ENCODE measurements at regions of chr2 and their contacts with region 1.

Region 1: GRCh38 chr2:159175182-159175581 is 111.3 kb downstream of the WDSUB1 start:
- DNase-seq: no peak
- H3K4me3 ChIP-seq: no peak overlapping the region
- CTCF ChIP-seq: no peak
- POLR2A ChIP-seq: no peak

Region 2: GRCh38 chr2:159728629-159729028 is 553.4 kb after region 1 on chr2:
- intact Hi-C with region 1: loop called (anchors 5 kb)
- DNase-seq: no peak
- H3K4me3 ChIP-seq: no peak overlapping the region
- CTCF ChIP-seq: no peak
- POLR2A ChIP-seq: no peak

Measured in lower leg skin (tissue), 4 donors.